ENCODE measurements at regions of chr7 and their contacts with region 1.

Region 1: GRCh38 chr7:99040104-99040958 is 103.6 kb downstream of the SMURF1 start:
- DNase-seq: peak; percentile 32
- H3K4me3 Mint-ChIP-seq: no peak overlapping the region
- H3K27ac Mint-ChIP-seq: peak overlapping the region; percentile 33
- H3K4me1 Mint-ChIP-seq: no peaks in the 10 kb centered on the region
- H3K27me3 Mint-ChIP-seq: no peaks in the 10 kb centered on the region

Region 2: GRCh38 chr7:99312316-99313203 is 272.2 kb after region 1 on chr7:
- intact Hi-C with region 1: loop called (anchors 1 kb)
- DNase-seq: peak; percentile 58
- H3K4me3 Mint-ChIP-seq: no peak overlapping the region
- H3K27ac Mint-ChIP-seq: no peak overlapping the region
- H3K4me1 Mint-ChIP-seq: peaks cover 15% of the 10 kb centered on the region
- H3K27me3 Mint-ChIP-seq: peaks cover 1% of the 10 kb centered on the region

Region 3: GRCh38 chr7:99459087-99459486 is 418.8 kb after region 1 on chr7:
- intact Hi-C with region 1: no loop called
- DNase-seq: no peak
- H3K4me3 Mint-ChIP-seq: no peak overlapping the region
- H3K27ac Mint-ChIP-seq: no peak overlapping the region
- H3K4me1 Mint-ChIP-seq: peaks cover 16% of the 10 kb centered on the region
- H3K27me3 Mint-ChIP-seq: no peaks in the 10 kb centered on the region

Measured in activated T-helper 2 cell treated with anti-CD3 and anti-CD28 coated beads, Interferon-gamma antibody, Interleukin-2, Interleukin-4, amounts not matched to agents 10 μg/mL and 5 μg/mL and 100 μg/mL, durations not matched to agents 14 hours and 24 hours and 36 hours (primary cell).